Caco-2 (cell line): ENCODE measurements at regions of chr21 and their contacts with region 1.

Region 1: GRCh38 chr21:34073032-34073869 is at the starts of genes MRPS6 and SLC5A3:
- DNase-seq: peak; percentile 91 to 92
- H3K4me3 ChIP-seq: peak within 1 kb of the TSS; percentile 86
- H3K4me3 Mint-ChIP-seq: peak within 1 kb of the TSS; percentile 87
- H3K27ac Mint-ChIP-seq: peak within 1 kb of the TSS; percentile 95
- H3K4me1 ChIP-seq: peaks cover 35% of the 10 kb centered on the region
- H3K4me1 Mint-ChIP-seq: peaks cover 32% of the 10 kb centered on the region
- H3K27me3 ChIP-seq: no peaks in the 10 kb centered on the region
- H3K27me3 Mint-ChIP-seq: no peaks in the 10 kb centered on the region
- CTCF ChIP-seq: peak in 1 of 2 experiments; percentile 17
- total RNA-seq, gene MRPS6: 102 and 104 TPM in 2 replicates
- total RNA-seq, gene SLC5A3: 19.1 and 19.8 TPM in 2 replicates

Region 2: GRCh38 chr21:33947451-33948095 is 125.7 kb before region 1 on chr21:
- CTCF ChIA-PET with region 1: interaction called, 4 read pairs
- POLR2A ChIA-PET with region 1: interaction called, 7 read pairs
- intact Hi-C with region 1: loop called (anchors 5 kb)
- DNase-seq: peak; percentile 87 to 92
- H3K4me3 ChIP-seq: peak overlapping the region; percentile 29
- H3K4me3 Mint-ChIP-seq: peak overlapping the region; percentile 67
- H3K27ac Mint-ChIP-seq: peak overlapping the region; percentile 97
- H3K4me1 ChIP-seq: peaks cover 29% of the 10 kb centered on the region
- H3K4me1 Mint-ChIP-seq: peaks cover 27% of the 10 kb centered on the region
- H3K27me3 ChIP-seq: no peaks in the 10 kb centered on the region
- H3K27me3 Mint-ChIP-seq: no peaks in the 10 kb centered on the region
- CTCF ChIP-seq: no peak

Region 3: DNA sequence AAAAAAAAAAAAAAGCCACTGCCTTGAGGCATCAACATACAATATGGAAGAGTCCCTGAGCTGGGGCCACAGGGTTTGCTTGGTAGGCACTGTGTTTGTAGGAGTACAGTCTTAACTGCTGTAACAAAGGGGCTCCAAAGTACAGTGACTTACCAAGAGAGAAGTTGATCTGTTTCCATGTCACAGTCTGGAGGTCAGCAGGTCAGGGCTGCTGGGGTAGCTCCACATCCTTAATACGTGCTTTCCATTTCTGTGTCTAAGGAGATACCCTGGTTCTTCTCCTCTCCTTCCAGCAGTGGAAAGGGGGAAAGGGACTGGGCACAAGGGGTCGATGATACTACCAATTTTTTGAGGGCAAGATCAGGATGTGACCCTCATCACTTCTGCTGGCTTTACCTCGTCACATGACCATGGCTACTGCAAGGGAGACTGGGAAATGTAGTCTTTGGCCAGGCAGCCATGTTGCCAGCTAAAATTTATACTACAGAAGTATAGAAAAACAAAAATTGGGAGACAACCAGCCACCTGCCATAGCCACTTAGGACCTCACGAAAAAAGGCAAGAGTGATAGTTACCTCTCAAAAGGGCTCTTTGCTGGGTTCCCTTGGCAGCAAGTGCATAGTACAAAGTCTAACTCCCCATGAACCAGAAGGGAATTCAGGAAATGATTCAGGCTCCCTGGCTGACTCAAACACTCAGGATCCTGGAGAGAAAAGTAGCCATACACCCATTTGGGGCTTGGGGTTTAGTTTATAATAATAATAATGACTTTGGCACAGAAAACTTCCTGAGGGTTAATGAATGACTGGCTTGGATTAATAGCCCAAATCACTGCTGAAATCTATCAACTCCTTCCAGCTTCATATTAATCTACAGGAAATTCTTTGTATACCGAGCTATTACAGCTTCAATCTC is 104.9 kb before region 1 on chr21:
- CTCF ChIA-PET with region 1: no interaction called
- POLR2A ChIA-PET with region 1: interaction called, 3 read pairs
- intact Hi-C with region 1: loop called (anchors 1 kb)
- DNase-seq: peak; percentile 46 to 60
- H3K4me3 ChIP-seq: no peak overlapping the region
- H3K4me3 Mint-ChIP-seq: peak overlapping the region; percentile 45
- H3K27ac Mint-ChIP-seq: peak overlapping the region; percentile 89
- H3K4me1 ChIP-seq: peaks cover 65% of the 10 kb centered on the region
- H3K4me1 Mint-ChIP-seq: peaks cover 53% of the 10 kb centered on the region
- H3K27me3 ChIP-seq: no peaks in the 10 kb centered on the region
- H3K27me3 Mint-ChIP-seq: no peaks in the 10 kb centered on the region
- CTCF ChIP-seq: no peak

Region 4: DNA sequence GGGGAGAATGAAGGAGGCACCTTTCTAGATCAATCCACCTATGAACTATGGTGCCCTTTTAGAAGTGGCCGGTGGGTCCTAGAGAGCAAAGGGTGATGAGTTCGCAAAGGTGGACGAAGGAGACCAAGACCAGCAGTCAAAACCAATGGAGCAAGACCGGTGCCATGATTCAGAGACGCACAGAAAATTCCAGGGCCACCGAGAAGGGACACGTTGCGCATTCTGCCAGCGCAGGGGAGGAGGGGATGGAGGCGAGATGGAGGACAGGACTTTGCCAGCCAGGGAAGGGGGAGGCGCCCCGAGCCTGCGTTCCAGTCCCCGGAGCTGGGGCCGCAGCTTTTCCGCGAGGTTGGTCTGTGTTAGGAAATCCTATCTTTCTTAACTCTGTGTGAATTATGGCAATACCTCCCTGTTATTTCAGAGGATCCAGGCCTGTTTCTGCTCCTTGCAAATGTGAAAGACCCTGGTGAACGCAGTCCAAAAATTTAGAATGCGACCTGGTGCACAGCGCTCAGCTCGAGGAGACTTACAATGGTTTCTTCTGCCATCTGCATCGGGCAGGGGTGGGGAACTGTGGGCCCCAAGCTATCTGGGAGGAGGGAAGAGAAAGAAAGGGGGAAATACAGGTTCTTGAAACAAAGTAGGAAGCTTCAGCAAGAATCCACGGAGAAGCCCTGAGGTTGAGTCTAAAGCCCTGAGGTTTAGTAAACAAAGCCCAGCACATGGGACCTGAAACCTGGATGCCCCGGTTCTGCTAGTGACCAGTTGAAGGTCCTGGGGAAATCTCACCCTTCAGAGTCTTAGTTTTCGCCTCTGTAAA is 129.5 kb after region 1 on chr21:
- CTCF ChIA-PET with region 1: interaction called, 8 read pairs
- POLR2A ChIA-PET with region 1: no interaction called
- intact Hi-C with region 1: loop called (anchors 1 kb)
- DNase-seq: peak; percentile 38 to 48
- H3K4me3 ChIP-seq: peak overlapping the region; percentile 57
- H3K4me3 Mint-ChIP-seq: peak overlapping the region; percentile 85
- H3K27ac Mint-ChIP-seq: peak overlapping the region; percentile 87
- H3K4me1 ChIP-seq: peaks cover 16% of the 10 kb centered on the region
- H3K4me1 Mint-ChIP-seq: peaks cover 17% of the 10 kb centered on the region
- H3K27me3 ChIP-seq: no peaks in the 10 kb centered on the region
- H3K27me3 Mint-ChIP-seq: no peaks in the 10 kb centered on the region
- CTCF ChIP-seq: no peak